ENCODE measurements at regions of chr4 and their contacts with region 1.

Region 1: DNA sequence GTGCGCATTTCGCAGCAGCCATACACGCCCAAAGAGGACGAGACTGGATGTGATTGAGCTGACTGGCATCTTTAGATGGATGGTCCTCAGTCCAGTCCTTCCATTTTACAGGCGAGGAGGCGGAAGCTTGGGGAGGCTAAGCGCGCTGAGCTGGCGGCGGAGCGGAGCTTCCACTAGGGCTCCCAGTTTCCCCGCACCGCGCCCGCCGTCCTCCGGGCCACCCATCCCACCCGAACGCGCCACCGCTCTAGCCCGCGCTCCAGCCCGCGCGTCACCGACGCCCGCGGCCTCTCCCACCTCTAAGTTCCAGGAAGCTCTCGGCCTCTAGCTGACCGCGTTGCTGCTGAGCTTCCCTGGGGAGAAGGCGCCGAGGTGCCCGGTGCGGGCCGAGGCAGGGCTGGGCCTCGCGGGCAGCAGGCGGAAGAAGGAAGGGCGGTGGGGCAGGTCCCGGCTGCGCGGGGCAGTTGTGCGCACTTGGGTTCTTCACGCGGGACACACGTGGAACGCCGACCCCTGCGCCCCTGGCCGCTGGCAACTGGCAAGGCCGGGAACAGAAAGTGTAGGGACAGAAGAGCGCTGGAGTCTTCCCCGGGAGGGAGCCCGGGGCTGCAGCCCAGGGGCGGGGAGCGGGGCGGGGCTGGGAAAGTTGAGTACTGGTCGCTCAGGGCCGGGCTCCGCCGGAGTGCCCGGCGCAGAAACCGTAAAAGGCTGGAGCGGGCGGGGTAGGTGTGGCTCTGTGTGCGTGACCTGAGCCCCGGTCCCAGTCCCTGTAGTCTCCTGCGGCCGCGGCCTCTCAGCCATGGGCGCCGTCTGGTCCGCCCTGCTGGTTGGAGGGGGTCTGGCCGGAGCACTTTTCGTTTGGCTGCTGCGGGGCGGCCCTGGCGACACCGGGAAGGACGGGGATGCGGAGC is at the start of gene STBD1:
- DNase-seq: peak; percentile 93
- total RNA-seq, gene STBD1: 37.6 TPM

Region 2: DNA sequence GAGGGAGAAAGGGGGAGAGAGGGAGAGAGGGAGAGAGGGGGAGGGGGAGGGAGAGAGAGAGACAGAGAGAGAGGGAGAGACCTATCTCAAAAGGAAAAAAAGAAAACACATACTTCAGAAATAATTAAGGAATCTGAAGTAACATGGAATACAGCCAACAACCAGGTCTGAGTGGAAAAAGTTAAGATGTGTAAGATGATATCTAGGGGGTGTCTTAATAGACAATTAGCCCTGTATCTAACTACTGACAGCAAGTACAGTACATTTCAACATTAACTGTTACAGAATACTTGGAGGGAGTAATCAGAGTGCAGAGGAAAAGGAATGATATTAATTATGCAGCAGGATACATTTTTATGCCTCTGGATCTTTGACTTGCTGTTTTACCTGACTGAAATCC is 180.4 kb before region 1 on chr4:
- intact Hi-C with region 1: no loop called
- DNase-seq: no peak

Region 3: GRCh38 chr4:76179398-76180318 is 126.6 kb before region 1 on chr4:
- intact Hi-C with region 1: loop called (anchors 1 kb)
- DNase-seq: peak; percentile 85

Region 4: GRCh38 chr4:76213415-76214176 is 92.6 kb before region 1 on chr4 and contains the start of gene SCARB2:
- intact Hi-C with region 1: loop called (anchors 2 kb)
- DNase-seq: peak; percentile 94
- total RNA-seq, gene SCARB2: 114 TPM

Region 5: GRCh38 chr4:76341063-76341462 is 34.8 kb after region 1 on chr4:
- intact Hi-C with region 1: loop called (anchors 2 kb)
- DNase-seq: no peak

Region 6: DNA sequence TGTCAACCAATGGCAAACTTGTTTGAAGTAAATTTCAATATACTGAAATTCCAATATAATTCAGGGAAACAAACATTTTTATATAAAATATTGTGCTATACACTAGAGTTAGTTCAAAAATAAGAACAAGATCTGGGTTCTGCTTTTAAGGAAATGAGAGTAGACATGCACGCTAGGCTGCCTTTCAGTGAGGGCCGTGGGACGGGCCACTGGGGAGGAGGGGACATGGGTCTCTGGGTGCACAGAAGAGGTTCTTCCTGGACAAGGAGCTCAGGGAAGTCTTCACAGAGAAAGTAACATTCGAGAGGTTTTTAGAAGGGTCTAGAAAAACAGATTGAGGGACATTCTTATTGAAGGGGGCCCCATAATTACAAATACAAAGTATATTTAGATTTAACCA is 193.2 kb after region 1 on chr4:
- intact Hi-C with region 1: loop called (anchors 10 kb)
- DNase-seq: no peak

Measured in cardiac septum (tissue), 1 donor.